ENCODE measurements at regions of chr3 and their contacts with region 1.

Region 1: DNA sequence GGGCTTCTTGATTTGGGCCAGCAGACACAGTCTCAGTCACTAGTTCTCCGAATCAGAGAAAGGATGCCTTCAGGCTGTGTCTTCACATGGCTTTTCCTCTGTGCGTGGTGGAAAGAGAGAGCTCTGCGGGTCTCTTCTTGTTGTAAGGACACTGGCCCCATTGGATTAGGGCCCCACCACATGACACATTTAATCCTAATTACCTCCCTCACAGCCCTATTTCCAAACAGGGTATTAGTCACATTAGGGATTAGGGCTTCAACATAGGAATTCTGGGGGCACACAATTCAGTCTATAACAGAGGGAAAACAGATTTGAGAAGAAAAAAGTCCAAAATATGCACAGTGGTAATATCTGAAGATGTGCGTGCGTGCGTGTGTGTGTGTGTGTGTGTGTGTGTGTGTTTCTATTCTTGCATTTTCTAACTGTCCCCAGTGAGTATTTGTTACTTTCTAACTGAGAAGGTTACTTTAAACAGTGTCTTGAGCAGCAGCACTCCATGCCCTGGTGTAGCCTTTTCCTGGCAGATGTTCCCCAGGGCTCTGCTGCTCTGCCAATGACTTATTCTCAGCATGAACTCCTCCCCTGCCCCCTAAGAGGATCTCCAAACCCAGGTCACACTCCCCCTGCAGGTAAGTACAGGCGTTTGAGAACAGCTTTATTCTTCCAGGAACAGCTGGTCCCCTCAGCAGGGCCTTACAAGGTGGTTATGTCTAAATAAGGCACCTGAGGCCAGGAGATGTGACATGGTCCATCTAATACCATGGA is 72.9 kb downstream of the RPL39L start:
- DNase-seq: peak; percentile 29
- H3K4me3 Mint-ChIP-seq: no peak overlapping the region
- H3K27ac Mint-ChIP-seq: peak overlapping the region; percentile 67
- H3K4me1 Mint-ChIP-seq: peaks cover 55% of the 10 kb centered on the region
- H3K27me3 Mint-ChIP-seq: no peaks in the 10 kb centered on the region

Region 2: DNA sequence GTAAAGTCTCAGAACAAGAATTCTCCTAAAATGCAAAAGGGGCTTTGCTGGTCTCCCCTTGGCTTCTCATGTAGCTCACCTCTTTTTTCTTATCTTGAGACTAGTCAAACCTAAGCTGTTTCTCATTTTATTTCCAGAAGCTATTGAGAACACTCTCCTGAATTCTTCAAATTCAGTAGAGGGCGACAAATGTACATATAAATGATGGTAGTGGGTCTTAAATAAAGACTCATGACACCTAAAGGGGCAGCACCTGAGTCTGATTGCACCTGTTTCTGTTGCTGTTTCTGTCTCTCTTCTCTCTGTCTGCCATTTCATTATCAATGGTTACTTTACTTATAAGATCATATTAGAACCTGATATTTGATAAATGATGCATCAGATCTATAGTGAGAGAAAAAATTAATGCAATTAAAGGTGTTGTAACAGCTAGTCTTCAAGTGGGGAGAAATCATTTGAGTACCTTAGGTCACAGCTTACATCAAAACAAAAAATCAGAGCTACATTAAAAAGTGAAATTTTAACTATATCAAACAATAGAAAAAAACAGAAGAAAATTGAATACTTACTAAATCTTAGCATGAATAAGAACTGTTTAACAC is 216.9 kb before region 1 on chr3:
- intact Hi-C with region 1: loop called (anchors 1 kb)
- DNase-seq: no peak
- H3K4me3 Mint-ChIP-seq: no peak overlapping the region
- H3K27ac Mint-ChIP-seq: no peak overlapping the region
- H3K4me1 Mint-ChIP-seq: peaks cover 26% of the 10 kb centered on the region
- H3K27me3 Mint-ChIP-seq: peaks cover 13% of the 10 kb centered on the region

Measured in activated T-helper 1 cell treated with anti-CD3 and anti-CD28 coated beads, Interleukin-12 subunit alpha, Interleukin-12 subunit beta, Interleukin-2, Interleukin-4 antibody, amounts not matched to agents 30 ng/mL and 10 ng/mL and 1 ng/mL, durations not matched to agents 14 hours and 24 hours and 36 hours (primary cell).